Breast epithelium (tissue), 4 donors: ENCODE measurements at regions of chr14 and their contacts with region 1.

Region 1: DNA sequence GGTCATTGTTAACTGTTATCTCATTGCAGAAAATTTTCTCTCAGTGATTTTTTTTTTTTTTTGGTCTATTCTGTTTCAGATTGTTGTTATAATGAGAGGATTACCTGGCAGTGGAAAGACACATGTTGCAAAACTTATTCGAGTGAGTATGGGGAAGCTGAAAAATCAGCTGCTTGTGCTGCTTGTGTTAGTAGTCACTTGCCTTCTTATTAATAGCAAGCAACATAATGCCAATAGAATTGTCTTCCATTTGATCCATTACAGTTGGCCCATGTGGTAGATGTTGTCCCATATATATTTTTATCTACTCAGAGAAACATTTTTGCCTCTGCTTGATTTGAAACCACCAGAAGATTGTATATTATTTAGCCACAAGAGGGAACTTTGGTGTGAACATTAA is 53.0 kb downstream of the YLPM1 start:
- DNase-seq: no peak
- H3K4me3 ChIP-seq: no peak overlapping the region
- H3K27ac ChIP-seq: no peak overlapping the region
- H3K4me1 ChIP-seq: no peaks in the 10 kb centered on the region
- H3K27me3 ChIP-seq: no peaks in the 10 kb centered on the region
- CTCF ChIP-seq: no peak
- POLR2A ChIP-seq: no peak

Region 2: DNA sequence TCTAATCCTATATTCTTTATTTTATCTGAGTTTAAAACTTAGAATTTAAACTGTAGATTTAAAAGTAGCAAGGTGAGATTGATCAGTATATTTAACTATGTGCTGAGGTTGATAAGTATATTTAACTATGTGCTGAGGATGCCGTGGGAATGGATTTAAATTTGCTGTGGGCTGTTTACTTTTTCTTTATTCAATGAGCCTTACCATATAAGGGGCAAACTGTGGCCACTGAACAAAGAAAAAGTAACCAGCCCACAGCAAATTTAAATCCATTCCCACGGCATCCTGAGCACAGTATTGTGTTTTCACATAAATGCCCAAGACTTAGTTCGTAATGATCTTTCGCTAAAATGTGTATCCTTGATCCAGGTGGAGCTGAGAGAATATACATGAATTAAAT is 16.7 kb after region 1 on chr14:
- intact Hi-C with region 1: loop called (anchors 2 kb)
- DNase-seq: no peak
- H3K4me3 ChIP-seq: no peak overlapping the region
- H3K27ac ChIP-seq: no peak overlapping the region
- H3K4me1 ChIP-seq: no peaks in the 10 kb centered on the region
- H3K27me3 ChIP-seq: no peaks in the 10 kb centered on the region
- CTCF ChIP-seq: no peak
- POLR2A ChIP-seq: no peak